ENCODE measurements at regions of chr22 and their contacts with region 1.

Region 1: DNA sequence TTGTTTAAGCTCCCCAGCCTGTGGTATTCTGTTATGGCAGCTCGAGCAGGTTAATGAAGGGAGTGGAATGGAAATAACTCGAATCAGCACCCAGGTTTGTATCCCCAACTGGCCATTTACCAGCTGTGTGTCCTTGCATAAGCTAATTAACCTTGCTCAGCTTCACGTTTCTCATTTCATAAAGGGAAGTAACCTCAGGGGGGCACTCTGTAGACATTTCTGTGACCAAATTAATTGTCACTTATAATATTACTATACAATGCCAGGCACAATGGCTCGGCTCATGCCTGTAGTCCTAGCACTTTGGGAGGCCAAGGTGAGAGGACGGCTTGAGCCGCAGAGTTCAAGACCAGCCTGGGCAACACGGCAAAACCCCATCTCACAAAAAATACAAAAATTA is 13.8 kb downstream of the ADA2 start:
- DNase-seq: no peak
- ATAC-seq: peak; percentile 49
- H3K4me3 ChIP-seq: no peak overlapping the region
- H3K4me3 Mint-ChIP-seq: no peak overlapping the region
- H3K27ac ChIP-seq: no peak overlapping the region
- H3K27ac Mint-ChIP-seq: no peak overlapping the region
- H3K4me1 ChIP-seq: no peaks in the 10 kb centered on the region
- H3K4me1 Mint-ChIP-seq: no peaks in the 10 kb centered on the region
- H3K27me3 ChIP-seq: no peaks in the 10 kb centered on the region
- H3K27me3 Mint-ChIP-seq: no peaks in the 10 kb centered on the region
- CTCF ChIP-seq: no peak

Region 2: GRCh38 chr22:17237038-17237668 is 31.7 kb after region 1 on chr22:
- CTCF ChIA-PET with region 1: no interaction called
- POLR2A ChIA-PET with region 1: no interaction called
- intact Hi-C with region 1: no loop called
- DNase-seq: peak; percentile 73
- ATAC-seq: peak; percentile 89
- H3K4me3 ChIP-seq: peak overlapping the region in 4 of 5 experiments; percentile 36 to 62 (median 50)
- H3K4me3 Mint-ChIP-seq: peak overlapping the region; percentile 87
- H3K27ac ChIP-seq: peak overlapping the region; percentile 49 to 69
- H3K27ac Mint-ChIP-seq: peak overlapping the region; percentile 90
- H3K4me1 ChIP-seq: peaks cover 12 to 21% of the 10 kb centered on the region in 2 donors
- H3K4me1 Mint-ChIP-seq: peaks cover 17% of the 10 kb centered on the region
- H3K27me3 ChIP-seq: no peaks in the 10 kb centered on the region
- H3K27me3 Mint-ChIP-seq: no peaks in the 10 kb centered on the region
- CTCF ChIP-seq: no peak

Region 3: GRCh38 chr22:17368554-17369438 is 163.4 kb after region 1 on chr22:
- CTCF ChIA-PET with region 1: interaction called, 11 read pairs
- POLR2A ChIA-PET with region 1: no interaction called
- intact Hi-C with region 1: no loop called
- DNase-seq: peak; percentile 64
- ATAC-seq: peak; percentile 73
- H3K4me3 ChIP-seq: peak overlapping the region; percentile 11 to 65 (median 50)
- H3K4me3 Mint-ChIP-seq: peak overlapping the region; percentile 89
- H3K27ac ChIP-seq: no peak overlapping the region
- H3K27ac Mint-ChIP-seq: peak overlapping the region; percentile 47
- H3K4me1 ChIP-seq: peaks cover 27 to 34% of the 10 kb centered on the region in 2 donors
- H3K4me1 Mint-ChIP-seq: peaks cover 31% of the 10 kb centered on the region
- H3K27me3 ChIP-seq: peaks cover 0 to 44% (median 25%) of the 10 kb centered on the region in 4 experiments
- H3K27me3 Mint-ChIP-seq: peaks cover 45% of the 10 kb centered on the region
- CTCF ChIP-seq: no peak